Activated T-helper 1 cell treated with anti-CD3 and anti-CD28 coated beads, Interleukin-12 subunit alpha, Interleukin-12 subunit beta, Interleukin-2, Interleukin-4 antibody, amounts not matched to agents 30 ng/mL and 10 ng/mL and 1 ng/mL, durations not matched to agents 14 hours and 24 hours and 36 hours (primary cell): ENCODE measurements at regions of chr3 and their contacts with region 1.

Region 1: DNA sequence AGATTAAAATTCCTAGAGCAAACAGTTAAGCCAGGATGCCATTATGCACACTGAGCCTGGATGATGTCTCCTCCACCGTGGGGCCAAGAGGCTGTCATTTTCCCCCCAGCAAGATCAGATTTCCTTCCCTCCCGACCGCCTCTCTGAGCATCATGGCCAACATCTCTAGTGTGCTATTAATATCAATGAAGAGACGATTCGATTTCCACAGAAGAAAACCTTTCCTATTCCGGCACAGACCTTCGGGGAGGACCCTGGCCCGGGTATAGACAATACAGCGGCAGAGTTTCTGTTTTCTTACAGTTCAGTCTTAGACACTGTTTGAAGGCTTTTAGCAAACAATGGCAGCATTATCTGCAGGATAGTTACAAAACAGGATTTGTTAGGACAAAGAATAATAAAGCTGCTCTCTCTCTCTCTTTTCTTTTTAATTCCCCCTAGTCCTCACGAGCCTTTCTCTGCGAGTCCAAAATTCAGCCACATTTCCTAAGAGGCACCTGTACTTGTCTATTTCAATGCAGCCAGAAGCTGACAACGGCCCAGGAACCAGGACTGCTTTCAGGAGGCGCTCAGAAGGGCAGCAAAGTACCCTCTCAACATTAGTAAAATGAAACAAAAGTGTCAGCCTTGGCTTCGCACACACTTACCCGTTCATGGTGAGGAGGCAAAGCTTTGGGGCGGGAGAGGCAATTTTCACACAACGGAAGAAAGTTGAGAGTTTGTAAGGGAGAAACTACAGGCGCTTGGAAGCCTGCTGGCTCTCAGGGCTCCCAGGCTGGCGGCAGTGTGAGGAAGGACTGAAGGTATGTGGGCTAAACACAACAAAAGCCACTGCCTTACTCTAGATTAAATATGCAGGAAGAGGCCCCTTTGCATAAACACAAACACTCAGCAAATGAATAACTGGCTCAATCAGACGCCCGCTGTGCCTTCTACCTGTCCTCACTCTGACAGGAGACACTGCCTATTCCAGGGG is 278.0 kb downstream of the FOXP1 start:
- DNase-seq: no peak
- H3K4me3 Mint-ChIP-seq: peak overlapping the region; percentile 87
- H3K27ac Mint-ChIP-seq: peak overlapping the region; percentile 63
- H3K4me1 Mint-ChIP-seq: peaks cover 79% of the 10 kb centered on the region
- H3K27me3 Mint-ChIP-seq: peaks cover 53% of the 10 kb centered on the region

Region 2: GRCh38 chr3:70603103-70603502 is 702.4 kb before region 1 on chr3:
- intact Hi-C with region 1: loop called (anchors 5 kb)
- DNase-seq: no peak
- H3K4me3 Mint-ChIP-seq: no peak overlapping the region
- H3K27ac Mint-ChIP-seq: no peak overlapping the region
- H3K4me1 Mint-ChIP-seq: peaks cover 5% of the 10 kb centered on the region
- H3K27me3 Mint-ChIP-seq: peaks cover 2% of the 10 kb centered on the region

Region 3: GRCh38 chr3:71050538-71051258 is 254.8 kb before region 1 on chr3:
- intact Hi-C with region 1: loop called (anchors 1 kb)
- DNase-seq: no peak
- H3K4me3 Mint-ChIP-seq: no peak overlapping the region
- H3K27ac Mint-ChIP-seq: peak overlapping the region; percentile 60
- H3K4me1 Mint-ChIP-seq: peaks cover 70% of the 10 kb centered on the region
- H3K27me3 Mint-ChIP-seq: peaks cover 5% of the 10 kb centered on the region

Region 4: GRCh38 chr3:71130471-71131374 is 174.8 kb before region 1 on chr3:
- intact Hi-C with region 1: loop called (anchors 1 kb)
- DNase-seq: peak; percentile 67
- H3K4me3 Mint-ChIP-seq: peak overlapping the region; percentile 89
- H3K27ac Mint-ChIP-seq: peak overlapping the region; percentile 93
- H3K4me1 Mint-ChIP-seq: peaks cover 65% of the 10 kb centered on the region
- H3K27me3 Mint-ChIP-seq: no peaks in the 10 kb centered on the region

Region 5: DNA sequence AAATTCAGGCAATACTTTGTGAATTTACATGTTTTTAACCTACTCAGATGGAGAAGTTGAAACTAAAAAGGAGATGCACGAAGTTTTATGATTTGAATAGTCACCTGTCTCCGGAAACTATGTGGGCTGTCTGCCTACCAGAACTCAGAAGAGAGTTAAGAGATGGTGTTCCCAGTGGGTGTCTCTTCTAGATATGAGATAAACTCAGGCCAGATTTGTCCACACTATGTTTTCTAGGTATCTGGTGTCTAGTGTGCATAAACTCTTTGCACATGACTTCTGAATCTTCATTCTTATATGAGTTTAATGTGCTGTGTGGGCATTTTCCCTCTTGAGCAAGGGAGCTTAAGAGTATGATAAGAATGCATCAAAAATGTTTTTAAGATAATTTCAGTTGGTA is 55.2 kb after region 1 on chr3:
- intact Hi-C with region 1: loop called (anchors 1 kb)
- DNase-seq: no peak
- H3K4me3 Mint-ChIP-seq: no peak overlapping the region
- H3K27ac Mint-ChIP-seq: peak overlapping the region; percentile 80
- H3K4me1 Mint-ChIP-seq: peaks cover 19% of the 10 kb centered on the region
- H3K27me3 Mint-ChIP-seq: peaks cover 25% of the 10 kb centered on the region

Region 6: DNA sequence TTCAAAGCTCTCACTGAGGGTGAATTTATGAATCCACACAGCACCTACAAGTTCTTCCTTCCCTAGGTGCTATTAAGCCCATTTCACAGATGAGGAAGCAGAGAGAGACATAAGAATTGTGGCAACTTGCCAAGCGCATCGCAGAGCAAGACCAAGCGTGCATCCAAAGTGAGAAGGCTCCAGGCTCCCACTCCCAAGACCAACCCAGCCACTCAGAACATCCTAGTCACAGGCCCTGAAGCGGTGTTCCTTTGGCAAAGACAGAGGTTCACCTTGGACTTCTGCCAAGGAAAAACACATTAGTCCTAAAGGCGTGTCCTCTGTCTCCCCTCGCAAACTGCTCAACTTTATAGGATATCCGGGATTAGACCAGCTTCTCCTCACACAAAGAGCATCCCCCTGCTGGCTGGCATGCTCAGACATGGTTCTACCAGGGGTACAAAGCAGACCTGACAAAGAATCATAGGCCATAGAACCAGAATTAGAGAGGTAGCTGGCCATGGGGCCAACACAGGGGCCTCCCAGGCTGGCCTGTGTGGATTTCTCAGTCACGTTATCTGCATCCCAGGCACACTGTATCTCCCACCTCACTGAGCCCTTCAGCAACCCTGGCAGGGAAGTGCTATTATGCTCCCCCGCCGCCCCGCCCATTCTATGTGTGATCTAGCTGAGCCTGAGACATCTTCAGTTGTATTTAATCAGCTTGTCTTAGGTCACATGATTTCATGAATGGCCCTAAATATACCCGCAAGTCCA is 117.8 kb after region 1 on chr3:
- intact Hi-C with region 1: loop called (anchors 1 kb)
- DNase-seq: no peak
- H3K4me3 Mint-ChIP-seq: no peak overlapping the region
- H3K27ac Mint-ChIP-seq: no peak overlapping the region
- H3K4me1 Mint-ChIP-seq: peaks cover 22% of the 10 kb centered on the region
- H3K27me3 Mint-ChIP-seq: peaks cover 61% of the 10 kb centered on the region

Region 7: GRCh38 chr3:71512000-71512399 is 206.5 kb after region 1 on chr3:
- intact Hi-C with region 1: loop called (anchors 5 kb)
- DNase-seq: peak; percentile 3
- H3K4me3 Mint-ChIP-seq: no peak overlapping the region
- H3K27ac Mint-ChIP-seq: no peak overlapping the region
- H3K4me1 Mint-ChIP-seq: peaks cover 8% of the 10 kb centered on the region
- H3K27me3 Mint-ChIP-seq: peaks cover 3% of the 10 kb centered on the region